ENCODE measurements at regions of chr1 and their contacts with region 1.

Region 1: GRCh38 chr1:244272471-244273261 is 179.0 kb downstream of the ADSS2 start:
- DNase-seq: peak; percentile 84
- H3K4me3 ChIP-seq: no peak overlapping the region
- H3K27ac ChIP-seq: peak overlapping the region; percentile 16 to 82 (median 74)
- H3K4me1 ChIP-seq: peaks cover 0 to 24% (median 16%) of the 10 kb centered on the region in 4 donors
- H3K27me3 ChIP-seq: no peaks in the 10 kb centered on the region
- CTCF ChIP-seq: peak; percentile 83 to 96 (median 94)
- EP300 ChIP-seq: no peak
- POLR2A ChIP-seq: no peak

Region 2: DNA sequence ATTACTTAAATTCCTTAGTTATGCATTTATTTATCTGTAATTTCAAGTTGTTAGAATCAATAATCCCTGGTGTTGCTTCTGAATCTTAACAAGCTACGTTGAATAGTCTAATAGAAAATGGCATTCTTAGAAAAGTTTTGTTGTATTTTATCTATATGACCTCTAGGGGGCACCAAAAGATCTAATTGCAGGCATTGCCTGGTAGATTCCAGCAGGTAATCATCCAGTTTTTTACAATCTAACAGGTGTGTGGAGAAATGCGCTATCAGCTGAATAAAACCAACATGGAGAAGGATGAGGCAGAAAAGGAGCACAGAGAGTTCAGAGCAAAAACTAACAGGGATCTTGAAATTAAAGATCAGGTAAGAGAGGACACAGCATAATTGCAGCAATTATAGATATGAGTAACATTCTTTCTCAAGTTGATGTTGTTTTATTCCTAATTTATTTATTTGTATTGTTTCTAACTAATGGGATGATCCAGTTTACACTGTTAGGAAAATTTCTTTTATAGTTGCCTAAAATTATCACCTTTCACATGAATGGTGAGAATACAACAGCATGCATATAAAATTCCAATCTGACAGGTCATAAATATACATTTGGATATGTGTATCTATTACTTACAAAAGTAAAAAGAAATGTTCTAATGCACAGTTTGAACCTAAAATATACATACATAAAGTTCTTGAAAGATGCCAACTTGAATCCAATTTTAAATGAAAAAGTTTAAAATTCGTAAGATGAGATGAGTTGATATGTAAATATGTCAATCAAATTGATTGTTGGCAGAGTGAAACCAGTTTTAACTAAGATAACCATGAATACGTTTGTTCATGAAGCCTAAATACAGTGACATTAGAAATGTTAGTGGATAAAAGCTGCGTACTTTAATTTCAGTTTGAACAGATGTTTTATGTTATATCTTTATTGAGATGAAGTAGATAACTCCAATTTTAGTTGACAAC is 928.4 kb before region 1 on chr1:
- intact Hi-C with region 1: loop called (anchors 1 kb)
- DNase-seq: no peak
- H3K4me3 ChIP-seq: no peak overlapping the region
- H3K27ac ChIP-seq: no peak overlapping the region
- H3K4me1 ChIP-seq: peaks cover 0 to 4% (median 0%) of the 10 kb centered on the region in 4 donors
- H3K27me3 ChIP-seq: no peaks in the 10 kb centered on the region
- CTCF ChIP-seq: peak; percentile 24 to 73 (median 64)
- EP300 ChIP-seq: no peak
- POLR2A ChIP-seq: no peak

Region 3: DNA sequence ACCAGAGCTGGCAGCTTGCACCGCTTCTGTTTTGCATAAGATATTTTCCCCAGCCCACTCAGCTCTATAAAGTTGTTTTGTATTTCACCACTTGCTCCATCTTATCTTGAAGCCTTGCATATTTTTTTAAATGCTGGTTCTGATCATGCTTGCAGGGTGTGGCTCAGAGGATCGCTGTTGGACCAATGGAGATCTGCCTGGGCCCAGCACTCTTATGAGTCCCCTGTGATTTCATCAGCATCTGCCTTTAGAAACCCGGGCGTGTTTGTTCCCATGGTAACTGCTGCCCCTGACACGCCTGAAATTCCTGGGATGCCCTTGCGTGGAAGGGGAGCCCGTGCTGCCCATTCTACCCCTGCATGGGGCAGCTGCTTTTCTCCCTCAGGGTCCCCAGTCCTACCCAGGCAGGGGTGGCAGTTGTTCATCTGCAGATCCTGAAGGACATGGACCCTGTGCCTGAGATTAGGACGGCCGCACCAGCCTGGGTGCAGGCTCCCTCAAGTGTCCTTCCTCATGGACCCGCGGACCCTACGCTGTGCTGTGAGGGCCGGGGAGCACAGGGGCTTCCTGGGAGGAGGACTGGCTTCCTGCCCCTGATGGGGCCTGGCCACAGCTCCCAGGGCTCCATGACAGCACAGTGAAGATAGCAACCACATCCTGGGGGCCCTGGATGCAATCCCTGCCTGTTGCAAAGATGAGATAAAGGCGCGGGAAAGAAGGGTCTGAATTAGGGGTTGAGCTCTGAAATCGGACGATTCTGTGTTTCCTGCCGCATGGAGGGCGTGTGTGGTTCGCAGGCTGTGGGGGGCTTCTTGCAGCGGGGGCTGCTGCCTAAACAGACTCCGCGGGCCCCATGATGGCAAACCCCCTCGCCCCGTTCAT is 790.3 kb before region 1 on chr1:
- intact Hi-C with region 1: loop called (anchors 5 kb)
- DNase-seq: peak; percentile 67
- H3K4me3 ChIP-seq: peak overlapping the region; percentile 34 to 63 (median 54)
- H3K27ac ChIP-seq: peak overlapping the region in 2 of 4 donors; percentile 24 to 39
- H3K4me1 ChIP-seq: peaks cover 0 to 17% (median 11%) of the 10 kb centered on the region in 4 donors
- H3K27me3 ChIP-seq: no peaks in the 10 kb centered on the region
- CTCF ChIP-seq: no peak
- EP300 ChIP-seq: no peak
- POLR2A ChIP-seq: no peak

Region 4: GRCh38 chr1:243748706-243749283 is 523.9 kb before region 1 on chr1:
- intact Hi-C with region 1: loop called (anchors 10 kb)
- DNase-seq: no peak
- H3K4me3 ChIP-seq: no peak overlapping the region
- H3K27ac ChIP-seq: no peak overlapping the region
- H3K4me1 ChIP-seq: peaks cover 0 to 37% (median 7%) of the 10 kb centered on the region in 4 donors
- H3K27me3 ChIP-seq: no peaks in the 10 kb centered on the region
- CTCF ChIP-seq: peak; percentile 55 to 77 (median 64)
- EP300 ChIP-seq: no peak
- POLR2A ChIP-seq: no peak

Region 5: DNA sequence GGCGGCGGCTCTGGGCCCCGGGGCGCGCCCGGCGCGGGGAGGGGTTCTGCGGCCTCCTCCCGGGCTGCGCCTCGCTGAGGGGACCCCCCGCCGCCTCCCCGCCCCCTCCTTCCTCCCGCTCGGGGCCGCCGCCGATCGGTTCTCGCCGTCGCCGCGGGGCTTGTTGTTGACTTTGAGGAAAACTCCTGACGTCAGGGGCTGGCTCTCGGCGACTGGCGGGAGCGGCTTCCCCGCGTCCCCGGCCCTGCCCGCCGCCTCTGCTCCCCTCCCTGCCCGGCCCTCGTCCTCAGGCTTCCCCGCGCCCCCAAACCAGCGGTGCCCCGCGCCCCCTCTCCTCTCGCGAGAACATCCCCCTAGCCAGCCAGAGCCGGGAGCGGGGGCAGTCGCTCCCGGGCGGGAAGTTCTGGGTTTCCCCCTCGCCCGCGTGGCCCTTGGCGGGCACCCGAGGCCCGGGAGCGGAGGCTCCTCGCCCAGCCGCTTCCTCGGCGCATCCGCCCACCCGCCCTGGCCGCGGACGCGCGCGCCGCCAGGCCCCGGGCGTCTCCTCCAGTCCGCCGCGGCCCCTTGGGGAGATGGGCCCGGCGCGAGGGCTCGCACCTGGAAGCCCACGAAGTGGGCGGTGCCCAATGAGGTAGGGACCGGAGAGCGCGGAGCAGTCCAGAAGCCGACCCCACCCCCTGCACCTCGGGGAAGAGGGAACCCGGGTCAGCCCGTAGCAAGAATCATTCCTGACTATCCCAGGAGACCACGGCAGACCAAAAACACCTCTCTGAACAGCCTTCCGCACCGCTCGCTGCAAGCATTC is 422.0 kb before region 1 on chr1:
- intact Hi-C with region 1: loop called (anchors 5 kb)
- DNase-seq: peak; percentile 93
- H3K4me3 ChIP-seq: peak overlapping the region; percentile 95 to 99 (median 97)
- H3K27ac ChIP-seq: peak overlapping the region; percentile 96 to 99 (median 98)
- H3K4me1 ChIP-seq: peaks cover 0 to 27% (median 16%) of the 10 kb centered on the region in 4 donors
- H3K27me3 ChIP-seq: no peaks in the 10 kb centered on the region
- CTCF ChIP-seq: no peak
- EP300 ChIP-seq: no peak
- POLR2A ChIP-seq: no peak

Region 6: DNA sequence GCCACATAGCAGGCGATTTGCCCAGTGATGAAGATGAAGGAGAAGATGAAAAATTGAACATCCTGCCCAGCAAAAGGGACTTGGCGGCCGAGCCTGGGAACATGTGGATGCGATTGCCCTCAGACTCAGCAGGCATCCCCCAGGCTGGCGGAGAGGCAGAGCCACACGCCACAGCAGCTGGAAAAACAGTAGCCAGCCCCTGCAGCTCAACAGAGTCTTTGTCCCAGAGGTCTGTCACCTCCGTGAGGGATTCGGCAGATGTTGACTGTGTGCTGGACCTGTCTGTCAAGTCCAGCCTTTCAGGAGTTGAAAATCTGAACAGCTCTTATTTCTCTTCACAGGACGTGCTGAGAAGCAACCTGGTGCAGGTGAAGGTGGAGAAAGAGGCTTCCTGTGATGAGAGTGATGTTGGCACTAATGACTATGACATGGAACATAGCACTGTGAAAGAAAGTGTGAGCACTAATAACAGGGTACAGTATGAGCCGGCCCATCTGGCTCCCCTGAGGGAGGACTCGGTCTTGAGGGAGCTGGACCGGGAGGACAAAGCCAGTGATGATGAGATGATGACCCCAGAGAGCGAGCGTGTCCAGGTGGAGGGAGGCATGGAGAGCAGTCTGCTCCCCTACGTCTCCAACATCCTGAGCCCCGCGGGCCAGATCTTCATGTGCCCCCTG is 218.3 kb before region 1 on chr1:
- intact Hi-C with region 1: no loop called
- DNase-seq: no peak
- H3K4me3 ChIP-seq: no peak overlapping the region
- H3K27ac ChIP-seq: no peak overlapping the region
- H3K4me1 ChIP-seq: peaks cover 0 to 39% (median 29%) of the 10 kb centered on the region in 4 donors
- H3K27me3 ChIP-seq: no peaks in the 10 kb centered on the region
- CTCF ChIP-seq: no peak
- EP300 ChIP-seq: no peak
- POLR2A ChIP-seq: no peak

Measured in sigmoid colon (tissue), 7 donors.